RWPE1 (cell line): ENCODE measurements at regions of chr18 and their contacts with region 1.

Region 1: GRCh38 chr18:13275075-13275474 is 56.5 kb downstream of the LDLRAD4 start:
- DNase-seq: no peak
- H3K27ac ChIP-seq: no peak overlapping the region
- CTCF ChIP-seq: no peak

Region 2: DNA sequence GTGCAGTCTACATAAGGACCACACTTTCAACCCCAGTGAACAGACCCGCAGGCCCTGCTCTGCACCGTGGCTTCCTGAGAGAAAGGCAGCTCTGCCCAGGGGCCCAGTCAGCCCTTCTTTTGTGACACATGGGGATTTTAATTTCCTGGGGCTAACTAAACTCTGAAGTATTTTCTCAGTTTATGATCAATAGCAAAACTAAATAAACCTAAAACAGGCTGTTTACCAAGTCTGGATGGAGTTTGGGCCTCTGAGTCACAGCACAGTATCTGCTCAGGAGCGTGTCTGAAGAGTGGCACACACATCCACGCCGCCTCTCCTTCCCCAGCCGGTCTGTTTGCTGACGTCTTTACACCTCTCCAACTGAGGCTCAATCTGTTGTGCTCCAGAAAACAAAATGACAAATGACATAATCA is 15.8 kb after region 1 on chr18:
- CTCF ChIA-PET with region 1: interaction called, 12 read pairs
- POLR2A ChIA-PET with region 1: no interaction called
- DNase-seq: no peak
- H3K27ac ChIP-seq: no peak overlapping the region
- CTCF ChIP-seq: no peak